BJ (cell line): ENCODE measurements at regions of chr18 and their contacts with region 1.

Region 1: GRCh38 chr18:70293166-70293565 is 4.3 kb downstream of the SOCS6 start:
- DNase-seq: no peak
- H3K4me3 ChIP-seq: no peak overlapping the region
- H3K27me3 ChIP-seq: no peaks in the 10 kb centered on the region
- CTCF ChIP-seq: no peak

Region 2: GRCh38 chr18:70165936-70166335 is 127.2 kb before region 1 on chr18:
- CTCF ChIA-PET with region 1: no interaction called
- POLR2A ChIA-PET with region 1: interaction called, 10 read pairs
- DNase-seq: no peak
- H3K4me3 ChIP-seq: no peak overlapping the region
- H3K27me3 ChIP-seq: no peaks in the 10 kb centered on the region
- CTCF ChIP-seq: no peak

Region 3: GRCh38 chr18:70331456-70332097 is 38.4 kb after region 1 on chr18:
- CTCF ChIA-PET with region 1: no interaction called
- POLR2A ChIA-PET with region 1: interaction called, 19 read pairs
- DNase-seq: no peak
- H3K4me3 ChIP-seq: no peak overlapping the region
- H3K27me3 ChIP-seq: no peaks in the 10 kb centered on the region
- CTCF ChIP-seq: no peak

Region 4: GRCh38 chr18:70414315-70414900 is 121.2 kb after region 1 on chr18:
- CTCF ChIA-PET with region 1: no interaction called
- POLR2A ChIA-PET with region 1: interaction called, 13 read pairs
- DNase-seq: no peak
- H3K4me3 ChIP-seq: no peak overlapping the region
- H3K27me3 ChIP-seq: no peaks in the 10 kb centered on the region
- CTCF ChIP-seq: no peak

Region 5: GRCh38 chr18:70578480-70578879 is 285.3 kb after region 1 on chr18:
- CTCF ChIA-PET with region 1: no interaction called
- POLR2A ChIA-PET with region 1: no interaction called
- DNase-seq: no peak
- H3K4me3 ChIP-seq: no peak overlapping the region
- H3K27me3 ChIP-seq: no peaks in the 10 kb centered on the region
- CTCF ChIP-seq: no peak